SK-MEL-5 (cell line): ENCODE measurements at regions of chr11 and their contacts with region 1.

Region 1: GRCh38 chr11:71212871-71213559 is 39.4 kb downstream of the SHANK2 start:
- DNase-seq: no peak

Region 2: GRCh38 chr11:71302911-71303310 is 89.9 kb after region 1 on chr11:
- in situ Hi-C with region 1: loop called (anchors 10 kb)
- DNase-seq: peak; percentile 44

Region 3: GRCh38 chr11:71364176-71364671 is 151.2 kb after region 1 on chr11:
- in situ Hi-C with region 1: no loop called
- DNase-seq: no peak